ENCODE measurements at regions of chr11 and their contacts with region 1.

Region 1: DNA sequence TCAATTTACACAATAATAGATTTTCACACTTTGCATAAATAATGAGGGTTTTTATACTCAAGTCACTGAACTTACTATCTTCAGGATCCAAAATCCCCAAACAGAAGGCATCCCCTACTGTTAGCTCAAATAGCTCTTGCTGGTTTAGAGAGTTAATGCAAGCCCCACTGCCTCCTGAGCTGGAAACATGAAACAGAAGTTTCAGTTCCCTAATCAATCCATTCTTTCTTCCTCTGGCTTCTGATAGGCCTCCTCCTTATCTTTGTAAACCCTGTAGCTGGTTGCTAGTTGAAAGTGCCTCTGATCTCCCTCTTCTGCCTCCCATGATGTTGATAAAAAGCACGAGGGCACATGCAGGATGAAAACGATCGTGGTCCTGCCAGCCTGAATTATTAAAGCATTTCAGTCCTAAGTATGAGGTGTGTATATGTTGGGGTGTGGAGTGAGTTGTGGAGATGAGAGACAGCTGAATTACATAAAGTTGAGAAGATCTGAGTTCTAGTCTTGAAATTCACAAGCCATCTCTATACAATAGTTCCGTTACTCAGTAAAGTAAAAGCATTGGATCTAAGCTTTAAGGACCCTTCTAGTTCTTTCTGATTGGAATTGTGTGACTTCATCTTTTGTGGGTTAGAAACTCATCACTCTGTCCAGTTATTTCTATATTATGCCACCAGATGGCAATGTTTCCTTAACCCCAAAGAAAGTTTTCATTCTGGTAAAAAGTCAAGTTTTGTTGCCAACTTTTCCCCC is 35.0 kb upstream of the EHF start:
- DNase-seq: no peak
- ATAC-seq: no peak
- H3K4me3 Mint-ChIP-seq: no peak overlapping the region
- H3K27ac Mint-ChIP-seq: no peak overlapping the region
- H3K4me1 Mint-ChIP-seq: no peaks in the 10 kb centered on the region
- H3K27me3 Mint-ChIP-seq: peaks cover 42% of the 10 kb centered on the region
- CTCF ChIP-seq: peak; percentile 64

Region 2: GRCh38 chr11:34013898-34014571 is 571.9 kb before region 1 on chr11:
- CTCF ChIA-PET with region 1: no interaction called
- POLR2A ChIA-PET with region 1: no interaction called
- intact Hi-C with region 1: no loop called
- DNase-seq: no peak
- ATAC-seq: no peak
- H3K4me3 Mint-ChIP-seq: no peak overlapping the region
- H3K27ac Mint-ChIP-seq: no peak overlapping the region
- H3K4me1 Mint-ChIP-seq: no peaks in the 10 kb centered on the region
- H3K27me3 Mint-ChIP-seq: no peaks in the 10 kb centered on the region
- CTCF ChIP-seq: no peak

Region 3: GRCh38 chr11:34536077-34536476 is 49.8 kb before region 1 on chr11:
- CTCF ChIA-PET with region 1: no interaction called
- POLR2A ChIA-PET with region 1: no interaction called
- intact Hi-C with region 1: no loop called
- DNase-seq: no peak
- ATAC-seq: no peak
- H3K4me3 Mint-ChIP-seq: no peak overlapping the region
- H3K27ac Mint-ChIP-seq: no peak overlapping the region
- H3K4me1 Mint-ChIP-seq: no peaks in the 10 kb centered on the region
- H3K27me3 Mint-ChIP-seq: peaks cover 20% of the 10 kb centered on the region
- CTCF ChIP-seq: no peak

Region 4: GRCh38 chr11:34565417-34566207 is 20.3 kb before region 1 on chr11:
- CTCF ChIA-PET with region 1: interaction called, 10 read pairs
- POLR2A ChIA-PET with region 1: no interaction called
- intact Hi-C with region 1: no loop called
- DNase-seq: peak; percentile 37
- ATAC-seq: peak; percentile 70
- H3K4me3 Mint-ChIP-seq: no peak overlapping the region
- H3K27ac Mint-ChIP-seq: no peak overlapping the region
- H3K4me1 Mint-ChIP-seq: no peaks in the 10 kb centered on the region
- H3K27me3 Mint-ChIP-seq: peaks cover 19% of the 10 kb centered on the region
- CTCF ChIP-seq: peak; percentile 75

Region 5: DNA sequence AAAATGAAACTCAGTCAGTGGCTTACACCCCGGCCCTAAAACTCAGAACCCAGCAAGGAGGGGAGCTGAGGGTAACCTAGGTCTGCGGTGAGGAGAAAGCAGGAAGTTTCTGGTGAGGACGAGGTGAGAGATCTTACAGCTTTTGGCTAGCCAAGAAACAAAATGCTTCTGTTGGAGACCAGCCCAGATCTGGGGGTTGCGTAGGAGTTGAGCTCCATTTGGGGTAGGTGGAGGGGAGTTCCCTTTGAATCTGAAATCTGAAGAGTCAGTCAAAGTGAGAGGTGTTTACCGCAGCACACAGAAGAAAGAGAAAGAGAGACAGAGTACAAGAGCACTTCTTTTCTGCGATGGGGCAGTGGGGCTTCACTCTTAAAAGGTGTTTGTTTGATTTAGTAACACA is 64.6 kb after region 1 on chr11:
- CTCF ChIA-PET with region 1: interaction called, 20 read pairs
- POLR2A ChIA-PET with region 1: no interaction called
- intact Hi-C with region 1: no loop called
- DNase-seq: peak; percentile 97
- ATAC-seq: peak; percentile 91
- H3K4me3 Mint-ChIP-seq: peak overlapping the region; percentile 39
- H3K27ac Mint-ChIP-seq: peak overlapping the region; percentile 77
- H3K4me1 Mint-ChIP-seq: peaks cover 42% of the 10 kb centered on the region
- H3K27me3 Mint-ChIP-seq: peaks cover 57% of the 10 kb centered on the region
- CTCF ChIP-seq: no peak

Region 6: DNA sequence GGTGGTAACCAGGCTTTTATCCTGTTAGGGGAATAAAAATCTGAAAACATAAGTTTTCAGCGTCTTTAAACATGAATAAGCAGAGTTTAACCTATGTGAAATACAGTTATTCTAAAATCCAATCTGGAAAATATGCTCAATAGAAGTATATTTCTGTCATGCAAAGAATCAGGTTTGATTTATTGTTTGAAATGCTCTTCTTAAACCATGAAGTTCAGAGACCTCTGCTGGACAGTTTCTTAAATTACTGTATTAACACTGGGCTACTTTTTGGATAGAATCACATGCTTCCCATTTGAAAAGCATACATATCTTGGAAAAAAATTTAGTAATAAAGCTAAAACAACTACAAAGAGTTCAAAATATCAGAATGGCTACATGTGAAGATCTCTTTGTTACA is 304.9 kb after region 1 on chr11:
- CTCF ChIA-PET with region 1: interaction called, 35 read pairs
- POLR2A ChIA-PET with region 1: no interaction called
- intact Hi-C with region 1: loop called (anchors 2 kb)
- DNase-seq: no peak
- ATAC-seq: no peak
- H3K4me3 Mint-ChIP-seq: no peak overlapping the region
- H3K27ac Mint-ChIP-seq: no peak overlapping the region
- H3K4me1 Mint-ChIP-seq: no peaks in the 10 kb centered on the region
- H3K27me3 Mint-ChIP-seq: no peaks in the 10 kb centered on the region
- CTCF ChIP-seq: peak; percentile 39

Region 7: GRCh38 chr11:34926101-34926830 is 340.4 kb after region 1 on chr11:
- CTCF ChIA-PET with region 1: interaction called, 10 read pairs
- POLR2A ChIA-PET with region 1: no interaction called
- intact Hi-C with region 1: no loop called
- DNase-seq: no peak
- ATAC-seq: peak; percentile 69
- H3K4me3 Mint-ChIP-seq: no peak overlapping the region
- H3K27ac Mint-ChIP-seq: no peak overlapping the region
- H3K4me1 Mint-ChIP-seq: peaks cover 18% of the 10 kb centered on the region
- H3K27me3 Mint-ChIP-seq: no peaks in the 10 kb centered on the region
- CTCF ChIP-seq: peak; percentile 84

Measured in activated CD8-positive, alpha-beta T cell treated with anti-CD3 and anti-CD28 coated beads for 36 hours (primary cell).